ENCODE measurements at regions of chr15 and their contacts with region 1.

Region 1: DNA sequence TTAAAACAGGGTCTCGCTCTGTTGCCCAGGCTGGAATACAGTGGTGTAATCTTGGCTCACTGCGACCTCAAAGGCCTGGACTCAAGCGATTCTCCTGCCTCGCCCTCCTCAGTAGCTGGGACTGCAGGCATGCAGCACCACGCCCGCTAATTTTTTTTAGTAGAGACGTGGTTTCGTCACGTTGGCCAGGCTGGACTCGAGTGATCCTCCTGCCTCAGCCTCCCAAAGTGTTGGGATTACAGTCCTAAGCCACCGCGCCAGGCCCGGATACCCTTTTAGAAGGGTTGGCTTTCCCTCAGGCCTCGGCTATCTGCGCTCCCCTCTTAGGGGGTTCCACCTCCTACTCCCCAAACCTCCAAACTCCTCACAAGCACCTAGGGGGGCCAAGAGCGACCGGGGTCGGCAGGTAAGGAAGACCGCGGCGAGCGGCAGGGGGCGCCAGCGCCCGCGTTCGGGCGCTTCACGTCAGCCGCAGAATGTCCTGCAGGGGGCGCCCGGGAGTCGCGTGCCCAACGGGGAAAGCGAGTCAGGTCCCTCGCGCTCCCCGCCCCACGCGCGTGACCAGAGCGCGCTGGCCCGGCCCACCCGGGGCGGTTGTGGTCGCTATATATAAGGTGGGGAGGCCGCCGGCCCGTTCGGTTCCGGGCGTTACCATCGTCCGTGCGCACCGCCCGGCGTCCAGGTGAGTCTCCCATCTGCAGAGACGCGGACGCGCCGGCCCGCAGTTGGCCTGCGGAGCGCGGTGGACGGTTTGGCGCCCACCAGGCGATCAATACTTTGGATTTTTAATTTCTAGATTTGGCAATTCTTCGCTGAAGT is 51.8 kb upstream of the GATM start:
- DNase-seq: no peak
- H3K4me3 ChIP-seq: peak overlapping the region; percentile 36
- H3K27me3 ChIP-seq: no peaks in the 10 kb centered on the region
- CTCF ChIP-seq: peak; percentile 99

Region 2: GRCh38 chr15:45314960-45315359 is 115.2 kb before region 1 on chr15:
- CTCF ChIA-PET with region 1: no interaction called
- POLR2A ChIA-PET with region 1: no interaction called
- DNase-seq: no peak
- H3K4me3 ChIP-seq: no peak overlapping the region
- H3K27me3 ChIP-seq: no peaks in the 10 kb centered on the region
- CTCF ChIP-seq: no peak

Region 3: GRCh38 chr15:45391746-45392583 is 38.2 kb before region 1 on chr15:
- CTCF ChIA-PET with region 1: no interaction called
- POLR2A ChIA-PET with region 1: no interaction called
- DNase-seq: no peak
- H3K4me3 ChIP-seq: no peak overlapping the region
- H3K27me3 ChIP-seq: peaks cover 5% of the 10 kb centered on the region
- CTCF ChIP-seq: no peak

Region 4: DNA sequence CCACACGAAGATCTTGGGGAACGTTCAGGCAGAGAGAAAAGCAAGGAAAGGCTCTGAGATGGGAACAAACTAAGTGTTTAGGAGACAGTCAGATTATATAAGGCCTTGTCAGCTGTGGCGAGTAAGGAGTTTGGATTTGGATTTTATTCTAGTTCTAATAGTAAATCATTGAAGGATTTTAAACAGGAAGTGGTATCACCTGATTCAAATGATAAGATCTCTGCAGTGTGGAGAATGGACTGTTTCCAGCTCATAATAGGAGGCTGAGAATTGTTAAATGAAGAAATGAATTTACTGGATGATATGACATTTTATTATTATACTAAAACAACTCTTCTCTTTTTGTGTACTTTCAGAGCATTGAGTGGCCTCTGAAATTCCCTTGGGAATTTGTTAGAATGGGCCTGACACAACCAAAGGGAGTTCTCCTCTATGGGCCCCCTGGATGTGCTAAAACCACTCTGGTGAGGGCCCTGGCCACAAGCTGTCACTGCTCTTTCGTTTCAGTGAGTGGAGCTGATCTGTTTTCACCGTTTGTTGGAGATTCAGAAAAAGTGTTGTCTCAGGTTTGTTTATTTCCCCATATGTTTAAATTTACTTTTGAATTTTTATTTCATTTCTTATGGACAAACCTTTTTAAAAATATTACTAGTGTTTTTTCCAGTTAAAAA is 15.8 kb before region 1 on chr15:
- CTCF ChIA-PET with region 1: interaction called, 43 read pairs
- POLR2A ChIA-PET with region 1: no interaction called
- DNase-seq: no peak
- H3K4me3 ChIP-seq: no peak overlapping the region
- H3K27me3 ChIP-seq: no peaks in the 10 kb centered on the region
- CTCF ChIP-seq: no peak

Measured in BJ (cell line).